ENCODE measurements at regions of chr3 and their contacts with region 1.

Region 1: GRCh38 chr3:50256807-50257535 is 12.0 kb upstream of the SEMA3B start:
- DNase-seq: peak; percentile 53
- H3K4me3 ChIP-seq: no peak overlapping the region
- H3K27ac ChIP-seq: no peak overlapping the region
- H3K4me1 ChIP-seq: peaks cover 20% of the 10 kb centered on the region
- H3K27me3 ChIP-seq: no peaks in the 10 kb centered on the region
- CTCF ChIP-seq: peak in 1 of 3 experiments; percentile 9
- POLR2A ChIP-seq: no peak

Region 2: GRCh38 chr3:49998326-49998725 is 258.6 kb before region 1 on chr3:
- intact Hi-C with region 1: no loop called
- DNase-seq: no peak
- H3K4me3 ChIP-seq: no peak overlapping the region
- H3K27ac ChIP-seq: no peak overlapping the region
- H3K4me1 ChIP-seq: no peaks in the 10 kb centered on the region
- H3K27me3 ChIP-seq: no peaks in the 10 kb centered on the region
- CTCF ChIP-seq: no peak
- POLR2A ChIP-seq: no peak

Region 3: GRCh38 chr3:50028336-50028735 is 228.6 kb before region 1 on chr3:
- intact Hi-C with region 1: no loop called
- DNase-seq: no peak
- H3K4me3 ChIP-seq: no peak overlapping the region
- H3K27ac ChIP-seq: no peak overlapping the region
- H3K4me1 ChIP-seq: no peaks in the 10 kb centered on the region
- H3K27me3 ChIP-seq: no peaks in the 10 kb centered on the region
- CTCF ChIP-seq: no peak
- POLR2A ChIP-seq: no peak

Region 4: GRCh38 chr3:50298836-50299637 is 42.1 kb after region 1 on chr3 and contains the starts of genes HYAL3 and NAA80:
- intact Hi-C with region 1: no loop called
- DNase-seq: peak; percentile 100
- H3K4me3 ChIP-seq: peak within 1 kb of the TSS; percentile 63 to 81
- H3K27ac ChIP-seq: peak within 1 kb of the TSS; percentile 78 to 87
- H3K4me1 ChIP-seq: peaks cover 25% of the 10 kb centered on the region
- H3K27me3 ChIP-seq: no peaks in the 10 kb centered on the region
- CTCF ChIP-seq: peak in 2 of 3 experiments; percentile 42 to 64
- POLR2A ChIP-seq: peak; percentile 65
- total RNA-seq, gene HYAL3: 13.8 to 25.2 TPM
- total RNA-seq, gene NAA80: 37.9 to 79.4 TPM

Region 5: DNA sequence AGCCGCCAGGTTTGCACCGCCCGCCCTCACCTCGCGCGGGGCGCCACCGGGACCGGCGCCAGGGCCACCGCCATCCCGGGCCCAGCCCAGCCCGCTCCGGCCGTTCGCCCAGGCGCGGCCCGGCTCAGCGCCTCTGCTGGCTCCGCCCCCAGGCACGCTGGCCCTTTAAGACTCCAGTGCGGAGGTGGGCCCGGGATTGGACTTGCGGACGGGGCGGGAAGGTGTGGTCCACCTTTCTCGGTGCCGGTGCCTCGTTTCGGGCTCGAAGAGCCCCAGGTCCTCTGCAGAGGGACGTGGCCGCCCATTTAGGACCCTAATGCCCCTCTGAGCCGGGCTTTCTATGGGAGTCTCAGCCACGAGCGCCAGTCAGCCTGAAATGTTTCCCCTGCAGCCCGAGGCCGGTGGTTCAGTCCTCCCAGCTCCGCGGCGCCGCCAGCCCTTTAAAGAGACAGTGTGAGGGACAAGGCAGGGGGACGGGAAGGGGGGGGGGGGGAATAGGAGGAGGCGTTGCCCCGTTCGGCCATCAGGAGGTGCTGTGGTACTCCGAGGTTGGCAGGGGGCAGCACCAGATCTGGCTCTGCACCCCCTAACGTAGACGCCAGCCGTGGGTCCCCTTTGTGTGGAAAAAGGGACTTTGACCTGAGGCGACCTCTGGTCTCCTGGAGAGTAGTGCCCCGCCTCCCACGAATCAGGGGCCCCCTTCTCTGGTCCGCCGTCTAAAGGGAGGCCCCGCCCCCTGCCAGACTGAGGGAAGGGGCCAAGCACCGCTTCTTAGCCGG is 64.6 kb after region 1 on chr3:
- intact Hi-C with region 1: loop called (anchors 10 kb)
- DNase-seq: peak; percentile 91
- H3K4me3 ChIP-seq: peak overlapping the region; percentile 76 to 82
- H3K27ac ChIP-seq: peak overlapping the region; percentile 93 to 96
- H3K4me1 ChIP-seq: peaks cover 53% of the 10 kb centered on the region
- H3K27me3 ChIP-seq: no peaks in the 10 kb centered on the region
- CTCF ChIP-seq: peak; percentile 45 to 65 (median 51)
- POLR2A ChIP-seq: no peak

Region 6: DNA sequence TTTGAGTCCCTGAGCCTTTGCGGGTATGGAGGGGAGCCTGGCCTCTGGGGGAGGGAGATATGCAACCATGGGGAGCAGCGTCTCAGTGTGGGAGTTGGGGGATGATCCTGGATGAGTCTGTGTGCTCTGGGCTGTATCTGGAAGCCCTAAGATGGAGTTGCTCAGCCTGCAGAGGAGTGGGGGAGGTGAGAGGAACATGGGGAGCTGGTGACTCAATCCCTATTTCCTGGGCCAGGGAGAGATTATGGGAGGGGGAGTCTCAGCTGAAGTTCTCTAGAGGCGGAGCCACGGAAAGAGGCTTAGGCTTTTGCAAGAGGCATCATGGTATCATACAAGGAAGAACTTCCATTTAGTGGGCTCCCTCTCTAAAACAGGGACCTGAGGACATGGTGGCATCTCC is 161.9 kb after region 1 on chr3:
- intact Hi-C with region 1: no loop called
- DNase-seq: no peak
- H3K4me3 ChIP-seq: no peak overlapping the region
- H3K27ac ChIP-seq: no peak overlapping the region
- H3K4me1 ChIP-seq: no peaks in the 10 kb centered on the region
- H3K27me3 ChIP-seq: no peaks in the 10 kb centered on the region
- CTCF ChIP-seq: no peak
- POLR2A ChIP-seq: no peak